Aorta (tissue), 5 donors: ENCODE measurements at regions of chr12 and their contacts with region 1.

Region 1: DNA sequence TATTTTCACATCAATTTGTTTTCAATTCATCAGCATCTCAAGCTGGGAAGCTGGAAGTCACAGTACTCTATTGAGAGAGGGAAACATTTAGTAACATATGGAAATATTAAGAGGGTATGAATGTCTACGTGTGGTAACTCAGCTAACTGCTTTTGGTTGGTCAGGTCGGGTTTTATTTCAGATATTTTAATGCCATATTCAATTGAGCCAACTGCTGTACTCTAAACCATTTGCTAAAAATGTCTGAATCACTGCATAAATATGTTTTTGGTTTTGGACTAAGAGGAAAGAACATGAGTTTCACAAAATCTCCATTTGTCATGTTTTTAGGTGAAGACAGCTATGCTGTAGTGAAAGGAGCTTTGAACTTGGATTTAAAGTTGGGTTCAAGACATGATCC is 18.9 kb upstream of the PPFIBP1 start:
- DNase-seq: no peak
- ATAC-seq: peak; percentile 51
- H3K4me3 ChIP-seq: no peak overlapping the region
- H3K27ac ChIP-seq: peak overlapping the region; percentile 18 to 88
- H3K4me1 ChIP-seq: peaks cover 2% of the 10 kb centered on the region in 2 donors
- H3K27me3 ChIP-seq: no peaks in the 10 kb centered on the region

Region 2: DNA sequence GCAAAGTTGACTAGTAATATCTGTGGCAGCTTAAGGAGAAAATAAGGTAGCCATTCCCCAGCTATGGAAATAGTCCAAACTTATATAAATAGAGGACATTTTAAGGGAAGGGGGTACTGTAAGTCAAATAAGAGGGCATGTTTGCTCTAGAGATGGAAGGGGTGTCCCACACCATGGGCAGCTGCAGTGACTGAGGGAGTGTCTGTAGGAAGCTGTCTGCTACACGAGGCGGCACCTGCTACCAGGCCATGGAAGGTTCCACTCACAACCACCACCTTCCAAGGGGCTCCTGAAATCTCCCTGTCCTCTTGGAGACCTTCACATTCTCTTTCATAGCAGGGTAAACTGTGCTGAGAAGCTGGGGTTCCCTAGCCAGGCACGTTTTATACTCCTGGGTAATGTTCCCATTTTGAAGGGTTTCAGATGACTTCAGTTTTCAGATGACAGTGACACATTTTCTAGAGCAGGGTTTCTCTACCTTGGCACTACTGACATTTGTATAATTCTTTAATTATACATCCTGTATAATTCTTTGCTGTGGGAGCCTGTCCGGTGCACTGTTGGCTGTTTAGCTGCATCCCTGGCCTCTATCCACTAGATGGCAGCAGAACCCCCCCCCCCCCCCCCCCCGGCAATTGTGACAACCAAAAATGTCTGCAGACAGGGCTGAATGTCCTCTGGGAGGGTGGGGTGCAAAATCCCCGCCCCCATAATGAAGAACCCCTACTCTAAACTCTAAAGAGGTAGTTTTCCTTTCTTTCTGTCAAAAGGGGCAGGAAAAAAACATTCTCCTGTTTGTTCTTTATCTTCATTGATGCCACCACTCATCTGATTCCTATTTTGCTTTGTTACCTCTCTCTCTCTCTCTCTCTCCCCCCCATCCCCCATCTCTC is 70.2 kb before region 1 on chr12:
- intact Hi-C with region 1: loop called (anchors 5 kb)
- DNase-seq: no peak
- ATAC-seq: no peak
- H3K4me3 ChIP-seq: no peak overlapping the region
- H3K27ac ChIP-seq: peak overlapping the region in 1 of 2 donors; percentile 54
- H3K4me1 ChIP-seq: no peaks in the 10 kb centered on the region
- H3K27me3 ChIP-seq: no peaks in the 10 kb centered on the region